ENCODE measurements at regions of chrX and their contacts with region 1.

Region 1: DNA sequence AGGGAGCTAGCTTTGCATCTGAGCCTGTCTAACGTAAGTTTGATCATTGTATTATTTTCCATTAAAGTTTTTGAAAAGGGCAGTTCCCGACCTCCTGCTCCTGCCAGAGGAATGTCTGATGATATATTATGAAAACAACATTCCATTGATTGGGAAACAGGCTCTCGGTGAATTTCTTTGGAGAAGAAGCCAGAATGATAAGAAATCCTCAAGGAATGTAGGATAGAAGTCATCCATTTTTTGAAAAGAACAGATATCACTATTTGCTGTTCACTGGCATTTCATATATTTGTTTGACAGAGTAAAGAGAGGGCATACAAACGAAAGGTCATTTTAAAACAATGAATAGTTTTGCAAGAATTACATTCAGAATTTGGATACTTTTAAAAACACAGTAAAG is 781.0 kb upstream of the HTR2C start:
- DNase-seq: peak in 1 of 2 experiments; percentile 49
- H3K4me3 ChIP-seq: no peak overlapping the region
- H3K4me3 Mint-ChIP-seq: no peak overlapping the region
- H3K27ac Mint-ChIP-seq: peak overlapping the region; percentile 56
- H3K4me1 ChIP-seq: peaks cover 30% of the 10 kb centered on the region
- H3K4me1 Mint-ChIP-seq: peaks cover 6% of the 10 kb centered on the region
- H3K27me3 ChIP-seq: no peaks in the 10 kb centered on the region
- H3K27me3 Mint-ChIP-seq: no peaks in the 10 kb centered on the region
- CTCF ChIP-seq: no peak

Region 2: DNA sequence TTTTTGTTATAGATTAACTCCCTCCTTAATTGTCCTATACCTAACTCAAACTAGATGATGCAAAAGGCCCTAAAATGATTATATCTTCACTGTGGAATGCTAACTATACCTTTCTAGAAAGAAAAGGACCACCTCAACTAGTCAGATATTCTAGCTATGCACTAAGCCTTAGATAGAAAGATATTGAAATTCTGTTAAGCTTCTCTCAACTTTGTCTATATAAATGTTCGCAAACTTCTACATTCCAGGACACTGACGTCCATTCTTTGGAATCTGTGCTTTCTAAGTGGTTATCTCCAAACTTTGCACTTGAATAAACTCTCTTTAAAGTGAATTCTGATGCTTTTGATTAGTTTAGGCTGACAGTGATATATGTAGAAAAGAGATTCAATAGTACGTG is 42.1 kb after region 1 on chrX:
- CTCF ChIA-PET with region 1: no interaction called
- POLR2A ChIA-PET with region 1: no interaction called
- intact Hi-C with region 1: loop called (anchors 1 kb)
- DNase-seq: peak in 1 of 2 experiments; percentile 16
- H3K4me3 ChIP-seq: no peak overlapping the region
- H3K4me3 Mint-ChIP-seq: peak overlapping the region; percentile 36
- H3K27ac Mint-ChIP-seq: peak overlapping the region; percentile 79
- H3K4me1 ChIP-seq: peaks cover 17% of the 10 kb centered on the region
- H3K4me1 Mint-ChIP-seq: peaks cover 15% of the 10 kb centered on the region
- H3K27me3 ChIP-seq: no peaks in the 10 kb centered on the region
- H3K27me3 Mint-ChIP-seq: no peaks in the 10 kb centered on the region
- CTCF ChIP-seq: no peak